ENCODE measurements at regions of chr7 and their contacts with region 1.

Region 1: DNA sequence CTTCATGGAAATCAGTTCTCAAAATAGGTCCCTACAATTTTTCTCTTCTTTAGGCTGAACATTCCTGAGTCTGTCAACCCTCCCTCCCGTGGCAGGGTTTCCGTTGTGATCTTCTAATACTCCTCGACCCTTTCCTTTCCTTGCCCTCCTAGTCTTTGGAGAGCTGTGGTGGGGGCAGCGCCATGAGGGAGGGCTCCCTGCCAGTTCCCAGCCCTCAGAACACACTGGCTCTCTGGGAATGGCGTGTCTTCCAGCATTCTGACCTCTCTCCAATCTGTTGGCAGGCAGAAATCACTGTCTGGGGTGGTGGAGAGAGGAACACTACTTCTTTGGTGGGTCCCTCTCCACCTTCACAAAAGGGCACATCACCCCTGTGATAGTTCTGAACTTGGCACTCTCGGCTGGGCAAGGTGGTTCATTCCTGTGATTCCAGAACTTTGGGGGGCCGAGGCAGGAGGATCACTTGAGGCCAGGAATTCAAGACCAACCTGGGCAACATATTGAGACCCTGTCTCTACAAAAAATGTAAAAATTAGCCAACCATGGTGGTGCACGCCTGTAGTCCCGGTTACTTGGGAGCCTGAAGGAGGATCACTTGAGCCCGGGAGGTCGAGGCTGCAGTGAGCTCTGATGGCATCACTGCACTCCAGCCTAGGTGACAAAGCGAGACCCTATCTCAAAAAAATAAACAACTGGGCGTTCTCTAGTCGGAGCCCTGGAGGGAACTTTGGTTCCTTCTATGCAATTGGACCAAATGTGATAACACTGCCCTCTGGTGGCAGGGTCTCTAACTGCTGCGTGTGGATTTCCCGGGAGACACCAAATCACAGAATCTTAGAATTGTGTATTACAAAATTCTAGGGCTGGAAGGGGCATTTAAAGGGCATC is 13.1 kb upstream of the ARPC1A start:
- DNase-seq: peak; percentile 57 to 72
- H3K4me3 ChIP-seq: no peak overlapping the region
- H3K27ac ChIP-seq: no peak overlapping the region
- H3K4me1 ChIP-seq: peaks cover 7% of the 10 kb centered on the region
- H3K27me3 ChIP-seq: no peaks in the 10 kb centered on the region
- CTCF ChIP-seq: peak; percentile 95

Region 2: GRCh38 chr7:99040104-99040958 is 272.2 kb before region 1 on chr7:
- CTCF ChIA-PET with region 1: interaction called, 3 read pairs
- POLR2A ChIA-PET with region 1: interaction called, 3 read pairs
- intact Hi-C with region 1: loop called (anchors 1 kb)
- DNase-seq: peak; percentile 64 to 75
- H3K4me3 ChIP-seq: no peak overlapping the region
- H3K27ac ChIP-seq: peak overlapping the region; percentile 20
- H3K4me1 ChIP-seq: no peaks in the 10 kb centered on the region
- H3K27me3 ChIP-seq: no peaks in the 10 kb centered on the region
- CTCF ChIP-seq: peak; percentile 81

Region 3: DNA sequence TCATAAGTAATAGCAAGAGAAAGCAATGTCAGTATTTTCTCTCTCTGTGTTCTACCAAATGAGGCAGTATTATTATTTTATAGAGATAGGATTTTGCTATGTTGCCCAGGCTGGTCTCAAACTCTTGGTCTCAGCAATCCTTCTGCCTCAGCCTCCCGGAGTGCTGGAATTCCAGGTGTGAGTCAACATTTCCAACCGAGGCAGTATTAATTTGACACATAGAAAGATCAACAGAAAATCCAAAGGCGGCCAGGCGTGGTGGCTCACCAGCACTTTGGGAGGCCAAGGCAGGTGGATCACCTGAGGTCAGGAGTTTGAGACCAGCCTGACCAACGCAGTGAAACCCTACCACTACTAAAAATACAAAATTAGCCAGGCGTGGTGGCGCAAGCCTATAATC is 240.4 kb before region 1 on chr7:
- CTCF ChIA-PET with region 1: no interaction called
- POLR2A ChIA-PET with region 1: interaction called, 18 read pairs
- intact Hi-C with region 1: no loop called
- DNase-seq: no peak
- H3K4me3 ChIP-seq: no peak overlapping the region
- H3K27ac ChIP-seq: peak overlapping the region; percentile 52; the same call in 1 of the 2 replicates
- H3K4me1 ChIP-seq: peaks cover 6% of the 10 kb centered on the region
- H3K27me3 ChIP-seq: no peaks in the 10 kb centered on the region
- CTCF ChIP-seq: no peak

Region 4: DNA sequence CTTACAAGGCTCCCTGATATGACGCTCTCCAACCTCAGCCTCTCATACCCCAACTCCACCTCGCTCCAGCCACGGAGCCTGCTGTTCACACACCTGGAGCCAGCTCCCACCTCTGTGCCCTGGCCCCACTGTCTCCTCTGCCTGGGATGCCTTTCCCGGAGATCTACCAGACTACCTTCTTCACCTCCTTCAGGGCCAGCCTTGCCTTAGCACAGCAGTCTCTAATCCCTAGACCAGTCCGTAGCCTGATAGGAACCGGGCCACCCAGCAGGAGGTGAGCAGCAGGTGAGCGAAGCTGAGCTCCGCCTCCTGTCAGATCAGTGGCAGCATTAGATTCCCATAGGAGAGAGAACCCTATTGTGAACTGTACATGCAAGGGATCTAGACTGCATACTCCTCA is 145.5 kb before region 1 on chr7:
- CTCF ChIA-PET with region 1: interaction called, 4 read pairs
- POLR2A ChIA-PET with region 1: no interaction called
- intact Hi-C with region 1: loop called (anchors 1 kb)
- DNase-seq: no peak
- H3K4me3 ChIP-seq: no peak overlapping the region
- H3K27ac ChIP-seq: no peak overlapping the region
- H3K4me1 ChIP-seq: peaks cover 13% of the 10 kb centered on the region
- H3K27me3 ChIP-seq: no peaks in the 10 kb centered on the region
- CTCF ChIP-seq: no peak

Region 5: DNA sequence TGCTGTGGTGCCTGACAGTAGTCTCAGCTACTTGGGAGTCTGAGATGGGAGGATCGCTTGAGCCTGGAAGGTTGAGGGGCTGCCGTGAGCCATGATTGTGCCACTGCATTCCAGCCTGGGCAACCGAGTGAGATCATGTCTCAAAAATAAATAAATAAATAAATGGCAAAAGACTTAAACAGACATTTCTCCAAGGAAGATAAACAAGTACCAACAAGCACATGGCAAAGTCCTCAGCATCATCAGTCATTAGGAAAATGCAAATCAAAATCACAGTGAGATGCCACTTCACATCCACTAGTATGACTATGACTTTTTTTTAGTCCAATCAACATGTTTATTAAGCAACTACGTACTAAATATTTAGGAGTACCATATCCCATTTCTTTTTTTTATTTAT is 83.3 kb before region 1 on chr7:
- CTCF ChIA-PET with region 1: no interaction called
- POLR2A ChIA-PET with region 1: interaction called, 4 read pairs
- intact Hi-C with region 1: loop called (anchors 1 kb)
- DNase-seq: no peak
- H3K4me3 ChIP-seq: no peak overlapping the region
- H3K27ac ChIP-seq: no peak overlapping the region
- H3K4me1 ChIP-seq: peaks cover 25% of the 10 kb centered on the region
- H3K27me3 ChIP-seq: no peaks in the 10 kb centered on the region
- CTCF ChIP-seq: no peak

Region 6: DNA sequence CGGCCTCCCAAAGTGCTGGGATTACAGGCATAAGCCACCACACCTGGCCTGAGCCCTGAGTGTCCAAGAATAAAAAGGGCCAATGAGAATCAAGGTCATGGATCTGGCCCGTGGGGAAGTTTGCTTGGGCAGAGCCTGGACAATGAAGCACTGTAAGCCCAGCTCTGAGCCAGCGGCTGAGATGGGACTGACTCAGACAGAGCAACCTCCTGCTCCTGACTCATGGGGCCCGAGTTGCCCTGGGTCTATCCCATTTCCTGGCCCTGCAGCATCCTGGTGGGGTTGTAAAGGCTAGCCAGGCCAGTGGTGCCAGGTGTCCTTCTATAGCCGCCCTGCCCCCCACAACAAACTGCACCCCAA is 45.1 kb before region 1 on chr7:
- CTCF ChIA-PET with region 1: interaction called, 16 read pairs
- POLR2A ChIA-PET with region 1: no interaction called
- intact Hi-C with region 1: no loop called
- DNase-seq: peak; percentile 79 to 93
- H3K4me3 ChIP-seq: no peak overlapping the region
- H3K27ac ChIP-seq: peak overlapping the region; percentile 90
- H3K4me1 ChIP-seq: peaks cover 41% of the 10 kb centered on the region
- H3K27me3 ChIP-seq: no peaks in the 10 kb centered on the region
- CTCF ChIP-seq: no peak

Region 7: DNA sequence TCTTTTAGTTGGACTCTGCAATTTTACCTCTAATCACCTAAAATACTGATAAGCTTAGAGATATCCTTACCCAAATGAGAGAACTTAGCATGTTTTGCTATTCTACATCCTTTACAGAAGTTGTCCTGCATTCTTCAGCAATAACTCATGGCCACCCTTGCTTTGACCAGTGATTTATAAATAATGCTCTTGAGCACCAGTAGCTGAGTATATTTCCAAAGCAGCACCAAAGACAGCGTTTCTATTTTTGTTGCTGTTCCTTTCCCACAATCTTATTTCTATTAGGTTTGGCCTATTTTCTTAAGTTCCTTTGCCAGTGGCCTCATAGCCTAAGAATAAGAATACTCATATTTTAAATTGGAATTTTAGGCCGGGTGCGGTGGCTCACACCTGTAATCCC is 28.1 kb after region 1 on chr7:
- CTCF ChIA-PET with region 1: no interaction called
- POLR2A ChIA-PET with region 1: no interaction called
- intact Hi-C with region 1: no loop called
- DNase-seq: no peak
- H3K4me3 ChIP-seq: no peak overlapping the region
- H3K27ac ChIP-seq: no peak overlapping the region
- H3K4me1 ChIP-seq: no peaks in the 10 kb centered on the region
- H3K27me3 ChIP-seq: no peaks in the 10 kb centered on the region
- CTCF ChIP-seq: no peak